ENCODE measurements at regions of chrX and their contacts with region 1.

Region 1: GRCh38 chrX:16826207-16826606 is 39.9 kb downstream of the TXLNG start:
- DNase-seq: no peak
- H3K4me3 ChIP-seq: no peak overlapping the region
- H3K27ac ChIP-seq: no peak overlapping the region
- H3K4me1 ChIP-seq: no peaks in the 10 kb centered on the region
- H3K27me3 ChIP-seq: no peaks in the 10 kb centered on the region
- CTCF ChIP-seq: peak; percentile 19 to 54 (median 38)
- POLR2A ChIP-seq: no peak

Region 2: DNA sequence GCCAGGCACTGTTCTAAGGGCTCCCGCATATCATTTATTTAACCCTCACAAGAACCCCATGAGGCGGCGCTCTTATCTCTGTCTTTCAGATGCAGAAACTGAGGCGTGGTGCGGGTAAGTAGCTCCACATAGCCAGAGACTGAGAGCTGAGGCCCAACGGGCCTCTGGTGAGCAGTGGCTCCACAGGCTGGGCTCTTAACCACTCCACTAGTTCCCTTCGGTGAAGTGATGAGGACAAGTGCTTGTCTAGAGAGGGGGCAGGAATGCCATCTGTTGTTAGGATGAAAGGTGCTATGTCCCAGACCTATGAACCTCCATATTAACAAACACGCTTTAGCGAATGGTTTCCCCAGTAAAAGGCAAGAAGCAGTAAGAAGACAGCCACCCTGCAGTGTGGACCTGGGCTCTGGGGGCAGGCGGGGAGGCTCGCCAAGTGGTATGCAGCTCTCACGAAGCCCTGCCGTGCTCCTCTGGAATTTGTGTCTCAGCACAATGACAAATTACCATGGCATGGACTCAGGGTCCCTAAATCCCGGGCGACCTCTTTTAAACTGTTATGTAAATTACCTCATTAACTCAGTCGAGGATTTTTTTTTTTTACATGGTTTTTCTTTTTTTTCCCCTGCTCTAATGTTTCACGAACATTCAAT is 197.1 kb before region 1 on chrX:
- intact Hi-C with region 1: no loop called
- DNase-seq: no peak
- H3K4me3 ChIP-seq: no peak overlapping the region
- H3K27ac ChIP-seq: no peak overlapping the region
- H3K4me1 ChIP-seq: no peaks in the 10 kb centered on the region
- H3K27me3 ChIP-seq: no peaks in the 10 kb centered on the region
- CTCF ChIP-seq: no peak
- POLR2A ChIP-seq: no peak

Region 3: GRCh38 chrX:16946361-16946964 is 120.3 kb after region 1 on chrX and contains the start of gene REPS2:
- intact Hi-C with region 1: loop called (anchors 5 kb)
- DNase-seq: peak; percentile 88
- H3K4me3 ChIP-seq: peak within 1 kb of the TSS; percentile 46 to 59
- H3K27ac ChIP-seq: peak within 1 kb of the TSS; percentile 54 to 57
- H3K4me1 ChIP-seq: no peaks in the 10 kb centered on the region
- H3K27me3 ChIP-seq: no peaks in the 10 kb centered on the region
- CTCF ChIP-seq: no peak
- POLR2A ChIP-seq: peak; percentile 43
- total RNA-seq, gene REPS2: 30.7 to 46.5 TPM

Region 4: GRCh38 chrX:17046478-17047097 is 220.4 kb after region 1 on chrX:
- intact Hi-C with region 1: loop called (anchors 10 kb)
- DNase-seq: peak; percentile 58
- H3K4me3 ChIP-seq: no peak overlapping the region
- H3K27ac ChIP-seq: no peak overlapping the region
- H3K4me1 ChIP-seq: no peaks in the 10 kb centered on the region
- H3K27me3 ChIP-seq: no peaks in the 10 kb centered on the region
- CTCF ChIP-seq: peak; percentile 15 to 73 (median 67)
- POLR2A ChIP-seq: no peak

Measured in prostate gland (tissue), 2 donors.